ENCODE measurements at regions of chr7 and their contacts with region 1.

Region 1: GRCh38 chr7:105652359-105652993 is 71.2 kb upstream of the EFCAB10 start:
- DNase-seq: peak; percentile 78
- CTCF ChIP-seq: peak; percentile 75

Region 2: GRCh38 chr7:105664816-105665525 is 12.5 kb after region 1 on chr7:
- CTCF ChIA-PET with region 1: interaction called, 22 read pairs
- POLR2A ChIA-PET with region 1: no interaction called
- DNase-seq: no peak
- CTCF ChIP-seq: no peak

Region 3: DNA sequence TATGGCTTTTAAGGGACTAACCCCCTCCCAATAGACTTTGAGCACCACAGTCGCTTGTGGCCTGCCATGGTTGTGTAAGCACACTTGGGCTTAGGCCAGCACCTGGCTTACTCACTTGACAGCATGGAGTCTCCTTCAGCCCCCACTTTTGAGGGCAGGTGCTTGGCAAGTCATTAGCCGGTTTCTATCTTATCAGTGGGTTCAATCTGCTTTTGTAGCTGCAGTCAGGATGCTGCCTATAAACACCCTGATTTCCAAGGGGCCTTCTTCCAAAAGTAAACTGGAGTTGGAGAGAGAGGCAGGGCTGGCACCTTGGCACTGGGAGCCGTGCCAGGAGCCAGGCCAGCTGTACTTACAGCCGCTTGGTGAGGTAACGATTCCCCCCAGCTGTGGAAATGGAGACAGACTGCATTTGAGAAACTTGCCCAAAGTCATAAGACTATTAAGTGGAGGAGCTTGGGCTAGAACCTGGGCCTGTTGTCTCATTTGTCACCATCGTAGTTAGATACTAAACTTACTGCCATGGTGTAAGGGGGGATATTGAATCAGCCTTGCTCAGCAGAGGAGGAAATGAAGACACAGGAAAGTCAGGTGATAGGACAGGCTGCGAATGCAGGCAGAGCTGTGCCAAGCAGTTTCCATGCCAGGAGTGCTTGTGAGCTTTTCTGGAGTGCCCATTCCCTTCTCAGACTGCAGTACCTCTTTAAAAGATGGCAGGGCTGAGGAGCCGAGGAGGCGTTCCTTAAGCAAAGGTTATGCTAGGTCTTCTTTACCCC is 21.1 kb after region 1 on chr7:
- CTCF ChIA-PET with region 1: interaction called, 22 read pairs
- POLR2A ChIA-PET with region 1: interaction called, 4 read pairs
- DNase-seq: no peak
- CTCF ChIP-seq: no peak

Region 4: GRCh38 chr7:105795390-105795729 is 142.9 kb after region 1 on chr7:
- CTCF ChIA-PET with region 1: no interaction called
- POLR2A ChIA-PET with region 1: no interaction called
- DNase-seq: no peak
- CTCF ChIP-seq: no peak